ENCODE measurements at regions of chr15 and their contacts with region 1.

Region 1: GRCh38 chr15:38563723-38564519 is 693 bp downstream of the RASGRP1 start:
- DNase-seq: peak; percentile 93
- ATAC-seq: peak; percentile 55
- H3K4me3 Mint-ChIP-seq: peak overlapping the region; percentile 93
- H3K27ac Mint-ChIP-seq: peak overlapping the region; percentile 98
- H3K4me1 Mint-ChIP-seq: peaks cover 54% of the 10 kb centered on the region
- H3K27me3 Mint-ChIP-seq: no peaks in the 10 kb centered on the region

Region 2: DNA sequence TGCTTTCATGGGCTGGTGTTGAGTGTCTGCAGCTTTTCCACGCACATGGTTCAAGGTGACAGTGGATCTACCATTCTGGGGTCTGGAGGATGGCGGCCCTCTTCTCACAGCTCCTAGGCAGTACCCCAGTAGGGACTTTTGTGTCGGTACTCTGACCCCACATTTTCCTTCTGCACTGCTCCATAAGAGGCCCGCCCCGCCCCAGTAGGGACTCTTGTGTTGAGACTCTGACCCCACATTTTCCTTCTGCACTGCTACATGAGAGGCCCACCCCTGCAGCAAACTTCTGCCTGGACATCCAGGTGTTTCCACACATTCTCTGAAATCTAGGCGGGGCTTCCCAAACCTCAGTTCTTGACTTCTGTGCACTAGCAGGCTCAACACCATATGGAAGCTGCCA is 1080.1 kb before region 1 on chr15:
- CTCF ChIA-PET with region 1: no interaction called
- POLR2A ChIA-PET with region 1: no interaction called
- intact Hi-C with region 1: no loop called
- DNase-seq: no peak
- ATAC-seq: no peak
- H3K4me3 Mint-ChIP-seq: no peak overlapping the region
- H3K27ac Mint-ChIP-seq: no peak overlapping the region
- H3K4me1 Mint-ChIP-seq: no peaks in the 10 kb centered on the region
- H3K27me3 Mint-ChIP-seq: no peaks in the 10 kb centered on the region

Region 3: GRCh38 chr15:38474155-38474757 is 89.7 kb before region 1 on chr15:
- CTCF ChIA-PET with region 1: no interaction called
- POLR2A ChIA-PET with region 1: interaction called, 4 read pairs
- intact Hi-C with region 1: loop called in 1 of 2 experiments (anchors 1 kb)
- DNase-seq: peak; percentile 30
- ATAC-seq: peak; percentile 97
- H3K4me3 Mint-ChIP-seq: no peak overlapping the region
- H3K27ac Mint-ChIP-seq: no peak overlapping the region
- H3K4me1 Mint-ChIP-seq: peaks cover 11% of the 10 kb centered on the region
- H3K27me3 Mint-ChIP-seq: no peaks in the 10 kb centered on the region

Region 4: DNA sequence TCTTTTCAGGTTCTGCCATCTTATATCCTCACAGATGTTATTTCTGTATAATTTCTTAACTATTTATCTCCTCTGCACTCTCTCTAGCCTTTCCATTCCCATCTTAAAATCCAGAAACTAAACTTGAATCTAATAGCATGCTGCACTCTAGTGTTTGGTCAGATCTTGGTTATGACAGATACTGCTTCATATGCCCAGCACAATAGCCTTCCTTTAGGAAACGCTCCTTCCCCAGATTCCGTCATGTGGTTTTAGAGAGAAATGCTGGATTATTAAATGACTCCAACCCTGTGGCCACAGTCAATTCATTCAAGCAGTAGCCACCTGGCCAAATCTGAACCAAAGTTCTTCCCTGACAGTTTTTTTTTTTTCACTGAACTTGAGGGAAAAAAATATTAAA is 18.7 kb before region 1 on chr15:
- CTCF ChIA-PET with region 1: interaction called, 10 read pairs
- POLR2A ChIA-PET with region 1: interaction called, 3 read pairs
- intact Hi-C with region 1: no loop called
- DNase-seq: no peak
- ATAC-seq: no peak
- H3K4me3 Mint-ChIP-seq: no peak overlapping the region
- H3K27ac Mint-ChIP-seq: peak overlapping the region; percentile 53
- H3K4me1 Mint-ChIP-seq: peaks cover 94% of the 10 kb centered on the region
- H3K27me3 Mint-ChIP-seq: no peaks in the 10 kb centered on the region

Region 5: DNA sequence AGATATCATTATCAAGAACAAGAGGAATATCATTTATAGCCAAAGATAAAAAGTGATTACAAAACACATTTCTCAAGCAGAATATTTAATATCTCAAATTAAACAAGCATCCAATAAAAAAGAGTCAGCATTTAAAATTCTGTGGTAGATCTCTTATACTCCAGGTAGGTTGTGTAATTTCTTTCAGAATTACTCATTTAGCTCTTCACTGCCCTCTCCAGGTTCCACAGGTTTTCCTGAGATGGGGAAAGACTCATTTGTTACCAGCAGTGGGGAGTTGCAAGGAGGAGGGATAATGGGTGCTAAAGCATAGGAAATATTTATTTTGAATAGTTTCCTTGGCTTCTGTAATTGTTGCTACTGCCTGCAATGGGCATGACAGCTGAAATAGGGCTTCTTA is 83.8 kb after region 1 on chr15:
- CTCF ChIA-PET with region 1: interaction called, 16 read pairs
- POLR2A ChIA-PET with region 1: interaction called, 5 read pairs
- intact Hi-C with region 1: loop called in 1 of 2 experiments (anchors 2 kb)
- DNase-seq: no peak
- ATAC-seq: no peak
- H3K4me3 Mint-ChIP-seq: no peak overlapping the region
- H3K27ac Mint-ChIP-seq: peak overlapping the region; percentile 34
- H3K4me1 Mint-ChIP-seq: peaks cover 75% of the 10 kb centered on the region
- H3K27me3 Mint-ChIP-seq: no peaks in the 10 kb centered on the region

Region 6: DNA sequence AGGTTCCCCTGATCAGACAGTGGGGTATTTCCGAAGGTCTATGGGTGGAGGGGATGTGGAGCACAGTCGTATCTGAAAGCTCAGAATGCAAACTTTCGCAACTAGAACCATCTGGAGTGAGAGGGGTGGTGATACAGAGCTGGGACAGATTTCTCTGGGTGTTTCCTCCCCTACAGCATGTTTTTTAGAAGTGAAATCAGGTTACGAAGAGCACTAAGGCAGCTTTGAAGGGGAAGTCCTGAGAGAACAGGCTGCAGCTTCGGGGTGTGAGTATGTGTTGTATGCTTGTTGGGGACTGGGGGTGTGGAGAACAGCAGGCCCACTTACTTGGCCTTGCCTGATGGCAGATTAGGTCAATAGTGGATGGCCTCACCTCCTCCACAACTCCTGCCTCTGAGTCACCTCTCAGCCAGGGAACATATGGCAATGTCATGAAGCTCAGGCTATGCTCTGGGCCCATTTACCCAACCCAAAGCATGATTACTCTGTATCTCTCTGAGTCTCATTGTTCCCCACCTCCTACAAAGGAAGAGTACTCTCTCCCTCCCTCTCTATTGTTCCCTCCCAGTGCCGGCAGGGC is 107.8 kb after region 1 on chr15:
- CTCF ChIA-PET with region 1: interaction called, 37 read pairs
- POLR2A ChIA-PET with region 1: interaction called, 22 read pairs
- intact Hi-C with region 1: loop called (anchors 1 kb)
- DNase-seq: peak; percentile 65
- ATAC-seq: peak; percentile 55
- H3K4me3 Mint-ChIP-seq: peak overlapping the region; percentile 60
- H3K27ac Mint-ChIP-seq: peak overlapping the region; percentile 98
- H3K4me1 Mint-ChIP-seq: peaks cover 75% of the 10 kb centered on the region
- H3K27me3 Mint-ChIP-seq: no peaks in the 10 kb centered on the region